Left lung (tissue), 14 donors: ENCODE measurements at regions of chr4 and their contacts with region 1.

Region 1: GRCh38 chr4:142719854-142720541 is 126.1 kb downstream of the INPP4B start:
- DNase-seq: peak in 1 of 4 donors; percentile 14
- ATAC-seq: peak; percentile 34
- H3K4me3 ChIP-seq: no peak overlapping the region
- H3K27ac ChIP-seq: no peak overlapping the region
- H3K4me1 ChIP-seq: no peaks in the 10 kb centered on the region
- H3K27me3 ChIP-seq: no peaks in the 10 kb centered on the region
- CTCF ChIP-seq: peak in 1 of 2 donors; percentile 40

Region 2: DNA sequence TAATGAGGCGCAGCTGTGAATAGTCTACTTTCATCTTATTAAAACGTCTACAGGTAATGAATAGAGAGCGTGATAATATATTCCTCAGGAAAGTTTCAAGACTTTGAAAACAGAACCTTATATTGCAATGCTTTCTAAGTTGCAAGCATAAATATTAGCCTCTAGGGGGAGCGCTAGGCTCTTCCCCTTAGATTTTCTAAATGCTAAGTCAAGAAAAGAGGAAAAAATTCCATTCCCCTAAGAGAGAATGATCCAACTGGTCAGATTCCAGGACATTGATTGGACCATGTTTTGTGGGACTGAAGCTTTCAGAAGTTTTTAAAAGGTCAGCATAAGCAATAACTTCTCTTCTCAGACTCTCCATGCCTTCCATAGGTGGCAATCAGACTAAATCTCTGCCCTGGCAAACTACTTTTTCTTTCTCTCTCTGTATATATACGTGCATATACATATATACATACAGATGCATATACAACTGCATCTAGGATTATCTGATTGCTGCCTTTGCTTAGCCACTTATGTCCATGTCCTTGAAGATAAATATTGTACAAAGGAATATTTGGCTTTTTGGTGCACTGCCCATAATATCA is 366.8 kb before region 1 on chr4:
- intact Hi-C with region 1: loop called in 1 of 2 experiments (anchors 10 kb)
- DNase-seq: peak in 2 of 4 donors; percentile 56 to 73
- ATAC-seq: peak; percentile 85
- H3K4me3 ChIP-seq: no peak overlapping the region
- H3K27ac ChIP-seq: no peak overlapping the region
- H3K4me1 ChIP-seq: peaks cover 0 to 10% of the 10 kb centered on the region in 2 donors
- H3K27me3 ChIP-seq: no peaks in the 10 kb centered on the region
- CTCF ChIP-seq: peak; percentile 77 to 90

Region 3: GRCh38 chr4:142512161-142512560 is 207.8 kb before region 1 on chr4:
- intact Hi-C with region 1: no loop called
- DNase-seq: no peak
- ATAC-seq: no peak
- H3K4me3 ChIP-seq: no peak overlapping the region
- H3K27ac ChIP-seq: no peak overlapping the region
- H3K4me1 ChIP-seq: no peaks in the 10 kb centered on the region
- H3K27me3 ChIP-seq: no peaks in the 10 kb centered on the region
- CTCF ChIP-seq: no peak

Region 4: DNA sequence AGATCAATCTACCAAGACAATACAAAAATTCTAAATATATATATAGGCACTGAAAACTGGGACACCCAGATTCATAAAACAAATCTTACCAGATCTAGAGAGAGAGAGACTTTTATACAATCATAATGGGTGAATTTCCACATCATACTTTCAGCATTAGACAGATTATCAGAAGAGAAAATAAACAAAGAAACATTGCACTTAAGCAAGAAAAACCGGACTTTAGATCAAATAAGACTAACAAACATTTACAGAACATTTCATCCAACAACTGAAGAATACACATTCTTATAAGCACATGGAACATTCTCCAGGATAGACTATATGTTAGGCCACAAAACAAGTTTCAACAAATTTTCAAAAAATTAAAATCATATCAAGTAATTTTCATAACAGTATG is 119.0 kb before region 1 on chr4:
- intact Hi-C with region 1: no loop called
- DNase-seq: no peak
- ATAC-seq: no peak
- H3K4me3 ChIP-seq: no peak overlapping the region
- H3K27ac ChIP-seq: no peak overlapping the region
- H3K4me1 ChIP-seq: no peaks in the 10 kb centered on the region
- H3K27me3 ChIP-seq: no peaks in the 10 kb centered on the region
- CTCF ChIP-seq: no peak

Region 5: DNA sequence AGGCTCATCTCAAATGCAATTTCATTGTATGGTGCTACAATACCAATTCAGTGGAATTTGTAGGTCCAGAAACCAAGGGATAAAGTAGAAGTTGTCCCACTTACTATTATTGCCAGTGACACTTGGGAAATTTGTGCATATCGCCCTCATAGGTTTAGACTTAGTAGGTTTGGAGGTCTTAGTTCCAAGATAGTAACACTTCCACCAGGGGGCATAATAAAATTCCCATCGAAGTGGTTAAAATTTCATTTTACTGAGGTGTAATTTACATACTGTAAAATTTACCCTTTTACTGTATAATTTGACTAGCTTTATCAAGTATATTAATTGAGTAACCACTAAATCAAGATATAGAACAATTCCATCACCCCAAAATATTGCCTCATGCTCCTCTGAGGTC is 48.5 kb before region 1 on chr4:
- intact Hi-C with region 1: no loop called
- DNase-seq: no peak
- ATAC-seq: no peak
- H3K4me3 ChIP-seq: no peak overlapping the region
- H3K27ac ChIP-seq: no peak overlapping the region
- H3K4me1 ChIP-seq: no peaks in the 10 kb centered on the region
- H3K27me3 ChIP-seq: no peaks in the 10 kb centered on the region
- CTCF ChIP-seq: no peak

Region 6: GRCh38 chr4:142960126-142960525 is 240.1 kb after region 1 on chr4:
- intact Hi-C with region 1: no loop called
- DNase-seq: peak in 2 of 4 donors; percentile 19 to 47
- ATAC-seq: peak; percentile 44
- H3K4me3 ChIP-seq: no peak overlapping the region
- H3K27ac ChIP-seq: no peak overlapping the region
- H3K4me1 ChIP-seq: peaks cover 0 to 4% of the 10 kb centered on the region in 2 donors
- H3K27me3 ChIP-seq: no peaks in the 10 kb centered on the region
- CTCF ChIP-seq: no peak